ENCODE measurements at regions of chr21 and their contacts with region 1.

Region 1: DNA sequence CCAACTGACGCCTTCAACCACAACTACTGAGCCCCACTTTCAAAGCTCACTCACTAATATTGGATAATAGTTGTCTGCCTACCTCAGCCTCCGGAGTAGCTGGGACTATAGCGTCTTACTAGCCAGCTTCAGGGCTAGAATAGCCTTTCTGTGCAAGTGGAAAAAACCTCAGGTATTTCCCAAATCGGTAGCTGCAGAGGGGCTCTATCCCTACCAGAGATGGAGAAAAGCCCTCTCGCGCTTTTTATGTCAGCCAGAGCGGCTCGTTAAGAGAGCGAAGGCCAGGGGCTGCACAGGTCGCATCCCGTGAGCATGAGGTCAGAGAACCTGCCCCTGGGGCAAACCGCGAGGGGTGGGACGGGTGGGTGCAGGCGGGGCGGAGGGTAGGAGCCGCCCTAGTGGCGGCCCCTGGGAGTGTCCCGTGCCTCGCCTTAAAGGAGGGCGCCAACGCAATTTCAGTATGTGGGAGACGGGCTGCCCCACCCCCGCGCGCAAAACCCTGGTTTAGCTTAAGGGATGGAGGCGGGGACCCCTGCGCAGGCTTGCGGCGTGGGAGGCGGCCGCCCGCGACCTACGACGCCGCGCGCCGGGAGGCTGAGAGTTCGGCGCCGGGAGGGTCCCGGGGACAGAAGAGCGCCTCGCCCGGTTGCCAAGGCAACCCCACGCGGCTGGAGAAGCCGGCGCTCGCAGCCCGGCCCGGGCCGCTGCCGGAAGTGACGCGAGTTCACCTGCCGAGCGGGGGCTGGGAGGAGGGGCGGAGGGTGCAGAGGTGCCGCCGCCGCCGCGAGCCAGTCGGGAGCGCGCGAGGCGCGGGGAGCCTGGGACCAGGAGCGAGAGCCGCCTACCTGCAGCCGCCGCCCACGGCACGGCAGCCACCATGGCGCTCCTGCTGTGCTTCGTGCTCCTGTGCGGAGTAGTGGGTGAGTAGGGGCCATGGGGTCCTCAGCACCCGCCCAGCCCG is at the start of gene CXADR:
- DNase-seq: peak; percentile 69
- H3K4me3 Mint-ChIP-seq: peak within 1 kb of the TSS; percentile 90
- H3K27ac Mint-ChIP-seq: no peak within 1 kb of the TSS
- H3K4me1 Mint-ChIP-seq: peaks cover 17% of the 10 kb centered on the region
- H3K27me3 Mint-ChIP-seq: peaks cover 39% of the 10 kb centered on the region
- total RNA-seq, gene CXADR: 0.05 and 0.18 TPM in 2 replicates

Region 2: DNA sequence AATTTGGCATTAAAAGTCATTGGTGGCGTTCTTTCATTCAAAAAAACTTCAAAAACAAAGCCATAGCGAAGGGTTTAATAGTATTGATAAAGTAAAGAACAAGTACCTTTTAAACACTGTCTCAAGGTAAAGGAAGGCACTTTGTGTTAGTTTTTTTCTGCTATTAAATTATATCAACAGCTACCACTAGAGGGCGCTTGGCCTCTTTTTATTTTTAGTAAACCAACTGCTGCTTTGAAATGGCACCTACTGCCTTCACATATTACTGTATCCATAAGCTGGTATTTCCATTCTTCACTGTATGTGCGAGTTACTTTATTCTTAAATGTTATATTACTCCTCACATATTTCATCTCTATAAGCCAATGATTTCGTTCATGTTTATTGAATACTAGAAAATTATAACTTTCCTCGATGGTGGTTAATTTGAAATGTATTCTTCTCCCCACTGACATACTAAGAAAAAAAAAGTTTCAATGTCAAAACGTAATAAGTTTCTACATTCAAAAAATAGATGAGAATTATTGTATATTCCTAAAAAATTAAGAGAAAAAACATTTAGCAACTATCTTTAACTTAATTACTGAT is 125.4 kb before region 1 on chr21:
- intact Hi-C with region 1: loop called (anchors 10 kb)
- DNase-seq: peak; percentile 35
- H3K4me3 Mint-ChIP-seq: no peak overlapping the region
- H3K27ac Mint-ChIP-seq: no peak overlapping the region
- H3K4me1 Mint-ChIP-seq: no peaks in the 10 kb centered on the region
- H3K27me3 Mint-ChIP-seq: peaks cover 2% of the 10 kb centered on the region

Region 3: DNA sequence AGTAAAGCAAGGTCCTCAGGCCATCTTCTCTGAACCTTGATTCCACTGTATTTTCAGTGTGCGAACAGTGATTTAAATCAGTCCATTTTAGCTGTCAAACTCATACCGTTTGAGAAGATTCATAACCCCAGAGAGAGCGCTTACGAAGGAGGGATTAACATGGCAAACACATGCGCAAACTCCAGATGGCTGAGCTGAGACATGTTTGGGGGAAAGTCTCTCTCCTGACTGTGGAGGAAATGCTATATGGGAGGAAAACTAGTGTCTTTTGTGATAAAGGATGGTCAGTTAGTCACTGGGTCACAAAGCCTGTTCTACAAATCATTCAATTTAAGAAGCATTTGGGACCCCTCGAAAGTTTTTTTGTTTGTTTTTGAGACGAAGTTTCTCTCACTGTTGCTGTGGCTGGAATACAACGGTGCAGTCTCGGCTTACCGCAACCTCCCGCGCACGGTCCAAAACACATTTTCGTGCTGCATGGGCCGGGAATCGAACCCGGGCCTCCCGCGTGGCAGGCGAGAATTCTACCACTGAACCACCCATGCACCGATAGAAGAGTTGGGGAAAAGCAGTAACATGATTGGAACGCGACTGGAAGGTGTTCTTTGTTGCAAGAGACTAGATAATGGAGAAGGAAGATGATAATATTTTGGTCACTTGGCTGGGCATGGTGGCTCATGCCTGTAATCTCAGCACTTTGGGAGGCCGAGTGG is 58.1 kb before region 1 on chr21:
- intact Hi-C with region 1: loop called (anchors 10 kb)
- DNase-seq: peak; percentile 2
- H3K4me3 Mint-ChIP-seq: peak overlapping the region; percentile 45
- H3K27ac Mint-ChIP-seq: peak overlapping the region; percentile 75
- H3K4me1 Mint-ChIP-seq: peaks cover 6% of the 10 kb centered on the region
- H3K27me3 Mint-ChIP-seq: peaks cover 5% of the 10 kb centered on the region

Region 4: GRCh38 chr21:17491716-17492414 is 20.7 kb before region 1 on chr21:
- intact Hi-C with region 1: loop called (anchors 2 kb)
- DNase-seq: no peak
- H3K4me3 Mint-ChIP-seq: no peak overlapping the region
- H3K27ac Mint-ChIP-seq: peak overlapping the region; percentile 49
- H3K4me1 Mint-ChIP-seq: peaks cover 33% of the 10 kb centered on the region
- H3K27me3 Mint-ChIP-seq: peaks cover 10% of the 10 kb centered on the region

Region 5: GRCh38 chr21:17611414-17612022 is 99.0 kb after region 1 on chr21:
- intact Hi-C with region 1: loop called (anchors 1 kb)
- DNase-seq: peak; percentile 76
- H3K4me3 Mint-ChIP-seq: peak overlapping the region; percentile 88
- H3K27ac Mint-ChIP-seq: peak overlapping the region; percentile 97
- H3K4me1 Mint-ChIP-seq: peaks cover 58% of the 10 kb centered on the region
- H3K27me3 Mint-ChIP-seq: no peaks in the 10 kb centered on the region

Region 6: DNA sequence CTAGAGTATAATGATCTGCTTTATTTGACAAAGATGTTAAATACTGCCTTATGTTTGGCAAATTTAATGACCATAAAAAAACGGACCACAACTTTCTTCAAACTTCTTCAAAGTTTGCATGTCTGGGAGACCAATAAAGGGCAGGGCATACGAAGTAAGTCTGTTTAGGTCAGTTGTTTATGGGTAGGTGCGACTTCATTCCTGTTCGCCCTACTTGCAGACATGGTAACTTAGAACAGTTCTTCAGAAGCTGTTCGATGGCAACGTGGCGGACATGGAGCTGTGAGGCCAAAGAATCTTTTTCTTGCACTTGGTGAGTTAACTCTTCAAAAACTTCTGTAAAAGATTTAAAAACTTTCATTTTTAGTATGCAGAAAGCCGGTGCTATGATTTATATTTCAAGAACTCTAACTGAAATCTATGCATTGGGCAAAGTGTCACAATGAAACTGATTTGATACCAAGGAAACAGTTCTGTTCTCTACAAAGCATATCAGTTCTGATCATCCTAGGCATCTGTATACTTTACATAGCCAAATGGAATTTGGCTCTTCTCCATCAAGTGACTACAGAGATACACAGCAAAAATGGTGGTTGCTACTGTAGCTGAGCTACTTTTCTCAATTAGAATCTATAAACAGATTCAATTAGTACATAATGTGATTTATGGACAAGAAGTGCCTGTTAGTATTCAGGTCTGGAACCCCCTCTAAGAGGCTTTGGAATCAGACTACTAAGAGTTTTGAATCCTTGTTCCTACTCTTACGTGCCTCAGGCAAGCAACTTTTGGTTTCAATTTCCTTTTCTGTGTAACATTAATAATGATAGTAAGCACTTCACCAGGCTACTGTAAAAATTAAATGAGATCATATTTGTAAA is 281.0 kb after region 1 on chr21:
- intact Hi-C with region 1: loop called (anchors 5 kb)
- DNase-seq: no peak
- H3K4me3 Mint-ChIP-seq: peak overlapping the region; percentile 78
- H3K27ac Mint-ChIP-seq: peak overlapping the region; percentile 80
- H3K4me1 Mint-ChIP-seq: peaks cover 78% of the 10 kb centered on the region
- H3K27me3 Mint-ChIP-seq: no peaks in the 10 kb centered on the region